CD8-positive, alpha-beta T cell (primary cell): ENCODE measurements at regions of chr9 and their contacts with region 1.

Region 1: GRCh38 chr9:14281136-14281795 is 32.7 kb downstream of the NFIB start:
- DNase-seq: no peak
- ATAC-seq: no peak
- H3K4me3 ChIP-seq: no peak overlapping the region
- H3K4me3 Mint-ChIP-seq: no peak overlapping the region
- H3K27ac ChIP-seq: no peak overlapping the region
- H3K27ac Mint-ChIP-seq: no peak overlapping the region
- H3K4me1 ChIP-seq: no peaks in the 10 kb centered on the region
- H3K4me1 Mint-ChIP-seq: no peaks in the 10 kb centered on the region
- H3K27me3 ChIP-seq: no peaks in the 10 kb centered on the region
- H3K27me3 Mint-ChIP-seq: peaks cover 12% of the 10 kb centered on the region
- CTCF ChIP-seq: no peak

Region 2: GRCh38 chr9:14156046-14156445 is 125.2 kb before region 1 on chr9:
- CTCF ChIA-PET with region 1: no interaction called
- POLR2A ChIA-PET with region 1: no interaction called
- intact Hi-C with region 1: no loop called
- DNase-seq: no peak
- ATAC-seq: no peak
- H3K4me3 ChIP-seq: no peak overlapping the region
- H3K4me3 Mint-ChIP-seq: no peak overlapping the region
- H3K27ac ChIP-seq: no peak overlapping the region
- H3K27ac Mint-ChIP-seq: no peak overlapping the region
- H3K4me1 ChIP-seq: no peaks in the 10 kb centered on the region
- H3K4me1 Mint-ChIP-seq: peaks cover 3% of the 10 kb centered on the region
- H3K27me3 ChIP-seq: no peaks in the 10 kb centered on the region
- H3K27me3 Mint-ChIP-seq: peaks cover 2% of the 10 kb centered on the region
- CTCF ChIP-seq: no peak

Region 3: GRCh38 chr9:14347406-14348122 is 66.3 kb after region 1 on chr9:
- CTCF ChIA-PET with region 1: no interaction called
- POLR2A ChIA-PET with region 1: no interaction called
- intact Hi-C with region 1: loop called in 1 of 2 experiments (anchors 10 kb)
- DNase-seq: no peak
- ATAC-seq: no peak
- H3K4me3 ChIP-seq: no peak overlapping the region
- H3K4me3 Mint-ChIP-seq: no peak overlapping the region
- H3K27ac ChIP-seq: no peak overlapping the region
- H3K27ac Mint-ChIP-seq: no peak overlapping the region
- H3K4me1 ChIP-seq: no peaks in the 10 kb centered on the region
- H3K4me1 Mint-ChIP-seq: peaks cover 6% of the 10 kb centered on the region
- H3K27me3 ChIP-seq: peaks cover 0 to 20% of the 10 kb centered on the region in 2 experiments
- H3K27me3 Mint-ChIP-seq: peaks cover 51% of the 10 kb centered on the region
- CTCF ChIP-seq: no peak